AG04450 (cell line): ENCODE measurements at regions of chr16 and their contacts with region 1.

Region 1: DNA sequence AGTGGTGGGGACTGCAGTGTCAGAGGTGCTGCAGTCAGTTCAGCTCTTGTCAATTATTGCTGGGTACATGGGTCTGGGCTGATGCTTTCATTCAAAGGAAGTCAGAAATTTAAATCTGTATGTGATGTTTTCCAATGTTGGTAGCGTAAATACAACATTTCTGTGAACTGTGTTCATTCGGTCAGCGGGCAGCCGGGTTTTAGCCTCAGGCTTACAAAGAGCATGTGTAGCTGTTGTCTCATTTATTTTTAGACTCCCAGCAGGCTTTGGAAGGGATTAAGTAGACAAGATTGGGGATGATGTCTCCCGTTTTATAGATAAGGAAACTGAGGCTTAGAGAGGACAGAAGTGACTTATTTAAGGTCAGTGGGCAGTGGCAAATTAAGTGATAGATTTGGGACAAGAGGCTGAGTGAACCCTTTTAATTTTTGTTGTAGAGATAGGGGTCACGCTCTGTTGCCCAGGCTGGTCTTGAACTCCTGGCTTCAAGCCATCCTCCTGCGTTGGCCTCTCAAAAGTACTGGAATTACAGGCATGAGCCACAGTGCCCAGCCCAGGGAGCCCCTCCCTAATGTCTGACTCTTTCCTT is 8.1 kb downstream of the AQP8 start:
- DNase-seq: no peak
- H3K4me3 ChIP-seq: no peak overlapping the region
- H3K27ac ChIP-seq: no peak overlapping the region
- H3K27me3 ChIP-seq: peaks cover 10% of the 10 kb centered on the region
- CTCF ChIP-seq: no peak

Region 2: DNA sequence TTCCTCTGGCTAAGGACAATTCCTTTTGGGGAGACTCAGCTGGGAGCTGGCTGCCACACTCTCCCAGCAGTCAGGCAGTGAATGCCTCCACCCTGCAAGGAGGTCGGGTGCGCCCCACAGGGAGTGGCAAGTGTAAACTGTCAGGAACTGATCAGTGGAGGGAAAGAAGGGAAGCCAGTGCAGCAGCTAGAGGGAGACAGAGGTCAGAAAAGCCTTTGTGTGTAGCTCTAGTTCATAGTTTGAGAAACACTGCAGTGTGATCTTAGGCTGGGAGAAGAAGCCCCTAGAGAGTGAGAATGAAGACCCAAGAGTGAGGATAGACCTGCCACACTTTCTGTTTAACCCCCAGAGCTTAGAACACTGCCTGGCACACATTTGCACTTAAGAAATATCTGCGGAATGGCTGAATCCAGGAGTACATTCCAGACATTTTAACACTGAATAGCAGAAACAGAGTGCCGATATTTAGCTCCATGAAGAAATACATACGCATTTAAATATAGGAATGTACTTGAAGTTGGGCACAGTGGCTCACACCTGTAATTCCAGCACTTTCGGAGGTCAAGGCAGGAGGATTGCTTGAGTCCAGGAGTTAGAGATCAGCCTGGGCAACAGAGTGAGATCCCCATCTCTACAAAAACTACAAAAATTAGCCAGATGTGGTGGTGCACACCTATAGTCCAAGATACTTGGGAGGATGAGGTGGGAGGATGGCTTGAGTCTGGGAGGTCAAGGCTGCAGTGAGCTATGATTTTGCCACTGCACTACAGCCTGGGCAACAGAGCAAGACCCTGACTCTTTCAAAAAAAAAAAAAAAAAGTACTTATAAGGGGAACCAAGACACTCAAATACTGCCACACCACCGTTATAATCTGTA is 390.1 kb before region 1 on chr16:
- CTCF ChIA-PET with region 1: interaction called, 14 read pairs
- POLR2A ChIA-PET with region 1: no interaction called
- DNase-seq: no peak
- H3K4me3 ChIP-seq: no peak overlapping the region
- H3K27ac ChIP-seq: no peak overlapping the region
- H3K27me3 ChIP-seq: no peaks in the 10 kb centered on the region
- CTCF ChIP-seq: peak; percentile 84

Region 3: GRCh38 chr16:25060920-25061319 is 163.9 kb before region 1 on chr16:
- CTCF ChIA-PET with region 1: interaction called, 32 read pairs
- POLR2A ChIA-PET with region 1: no interaction called
- DNase-seq: no peak
- H3K4me3 ChIP-seq: no peak overlapping the region
- H3K27ac ChIP-seq: no peak overlapping the region
- H3K27me3 ChIP-seq: no peaks in the 10 kb centered on the region
- CTCF ChIP-seq: no peak

Region 4: GRCh38 chr16:25126820-25127232 is 98.0 kb before region 1 on chr16:
- CTCF ChIA-PET with region 1: interaction called, 37 read pairs
- POLR2A ChIA-PET with region 1: no interaction called
- DNase-seq: peak; percentile 54
- H3K4me3 ChIP-seq: no peak overlapping the region
- H3K27ac ChIP-seq: peak overlapping the region; percentile 81
- H3K27me3 ChIP-seq: no peaks in the 10 kb centered on the region
- CTCF ChIP-seq: peak; percentile 83

Region 5: DNA sequence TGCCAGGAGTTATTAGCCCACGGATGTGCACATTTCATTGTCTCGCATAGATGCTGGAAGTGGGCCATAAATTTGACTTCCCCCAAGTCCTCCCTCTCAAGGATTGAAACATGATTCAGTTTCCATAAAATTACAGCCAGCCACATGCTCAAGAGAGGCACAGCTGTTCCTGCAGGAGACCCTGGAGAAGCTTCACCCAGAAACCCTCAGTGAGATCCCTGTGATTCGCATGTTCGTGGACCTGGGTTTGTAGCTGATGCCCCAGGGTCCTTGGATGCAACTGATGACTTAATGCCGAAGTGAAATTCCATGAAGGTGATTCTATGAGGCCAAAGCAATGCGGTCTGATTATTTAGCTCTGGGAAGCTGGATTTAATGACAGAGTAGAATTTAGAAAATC is 32.7 kb before region 1 on chr16:
- CTCF ChIA-PET with region 1: interaction called, 17 read pairs
- POLR2A ChIA-PET with region 1: no interaction called
- DNase-seq: no peak
- H3K4me3 ChIP-seq: no peak overlapping the region
- H3K27ac ChIP-seq: no peak overlapping the region
- H3K27me3 ChIP-seq: no peaks in the 10 kb centered on the region
- CTCF ChIP-seq: no peak

Region 6: GRCh38 chr16:25250467-25250866 is 25.6 kb after region 1 on chr16:
- CTCF ChIA-PET with region 1: interaction called, 20 read pairs
- POLR2A ChIA-PET with region 1: no interaction called
- DNase-seq: no peak
- H3K4me3 ChIP-seq: no peak overlapping the region
- H3K27ac ChIP-seq: no peak overlapping the region
- H3K27me3 ChIP-seq: no peaks in the 10 kb centered on the region
- CTCF ChIP-seq: no peak